CD8-positive, alpha-beta T cell (primary cell): ENCODE measurements at regions of chr10 and their contacts with region 1.

Region 1: GRCh38 chr10:104231784-104232612 is at the start of gene CFAP43:
- DNase-seq: peak; percentile 98 to 100 (median 99)
- ATAC-seq: peak; percentile 99
- H3K4me3 ChIP-seq: peak within 1 kb of the TSS; percentile 64 to 67
- H3K4me3 Mint-ChIP-seq: peak within 1 kb of the TSS; percentile 87
- H3K27ac ChIP-seq: peak within 1 kb of the TSS in 1 of 2 experiments; percentile 52
- H3K27ac Mint-ChIP-seq: peak within 1 kb of the TSS; percentile 79
- H3K4me1 ChIP-seq: peaks cover 4% of the 10 kb centered on the region
- H3K4me1 Mint-ChIP-seq: peaks cover 10% of the 10 kb centered on the region
- H3K27me3 ChIP-seq: peaks cover 0 to 10% of the 10 kb centered on the region in 2 experiments
- H3K27me3 Mint-ChIP-seq: peaks cover 9% of the 10 kb centered on the region
- CTCF ChIP-seq: no peak
- total RNA-seq, gene CFAP43: not detected

Region 2: DNA sequence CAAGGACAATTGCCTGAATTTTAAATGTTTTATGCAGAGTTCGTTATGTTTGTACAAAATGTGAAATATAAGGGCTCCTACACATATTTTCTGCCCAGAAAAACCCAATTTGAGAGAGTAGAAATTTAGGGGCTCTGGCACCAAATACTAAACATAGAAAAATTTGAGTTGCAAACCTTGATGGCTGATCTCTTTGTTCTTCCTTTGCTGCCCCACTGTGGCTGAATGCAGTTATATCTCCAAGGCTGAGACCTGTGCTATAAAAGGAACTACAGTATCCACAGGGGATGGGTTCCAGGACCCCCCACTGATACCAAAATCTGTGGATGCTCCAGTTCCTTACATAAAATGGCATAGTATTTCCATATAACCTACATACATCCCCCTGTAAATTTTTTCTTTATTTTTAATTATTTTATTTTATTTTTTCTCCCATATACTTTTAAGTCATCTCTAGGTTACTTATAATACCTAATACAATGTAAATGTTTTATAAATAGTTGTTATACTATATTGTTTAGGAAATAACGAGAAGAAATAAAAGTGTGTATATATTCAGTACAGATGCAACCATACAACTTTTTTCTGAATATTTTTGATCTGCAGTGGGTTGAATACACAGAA is 22.3 kb before region 1 on chr10:
- CTCF ChIA-PET with region 1: no interaction called
- POLR2A ChIA-PET with region 1: no interaction called
- intact Hi-C with region 1: no loop called
- DNase-seq: peak in 7 of 9 experiments; percentile 10 to 65 (median 45)
- ATAC-seq: peak; percentile 71
- H3K4me3 ChIP-seq: no peak overlapping the region
- H3K4me3 Mint-ChIP-seq: no peak overlapping the region
- H3K27ac ChIP-seq: no peak overlapping the region
- H3K27ac Mint-ChIP-seq: no peak overlapping the region
- H3K4me1 ChIP-seq: no peaks in the 10 kb centered on the region
- H3K4me1 Mint-ChIP-seq: no peaks in the 10 kb centered on the region
- H3K27me3 ChIP-seq: no peaks in the 10 kb centered on the region
- H3K27me3 Mint-ChIP-seq: peaks cover 14% of the 10 kb centered on the region
- CTCF ChIP-seq: peak; percentile 54

Region 3: DNA sequence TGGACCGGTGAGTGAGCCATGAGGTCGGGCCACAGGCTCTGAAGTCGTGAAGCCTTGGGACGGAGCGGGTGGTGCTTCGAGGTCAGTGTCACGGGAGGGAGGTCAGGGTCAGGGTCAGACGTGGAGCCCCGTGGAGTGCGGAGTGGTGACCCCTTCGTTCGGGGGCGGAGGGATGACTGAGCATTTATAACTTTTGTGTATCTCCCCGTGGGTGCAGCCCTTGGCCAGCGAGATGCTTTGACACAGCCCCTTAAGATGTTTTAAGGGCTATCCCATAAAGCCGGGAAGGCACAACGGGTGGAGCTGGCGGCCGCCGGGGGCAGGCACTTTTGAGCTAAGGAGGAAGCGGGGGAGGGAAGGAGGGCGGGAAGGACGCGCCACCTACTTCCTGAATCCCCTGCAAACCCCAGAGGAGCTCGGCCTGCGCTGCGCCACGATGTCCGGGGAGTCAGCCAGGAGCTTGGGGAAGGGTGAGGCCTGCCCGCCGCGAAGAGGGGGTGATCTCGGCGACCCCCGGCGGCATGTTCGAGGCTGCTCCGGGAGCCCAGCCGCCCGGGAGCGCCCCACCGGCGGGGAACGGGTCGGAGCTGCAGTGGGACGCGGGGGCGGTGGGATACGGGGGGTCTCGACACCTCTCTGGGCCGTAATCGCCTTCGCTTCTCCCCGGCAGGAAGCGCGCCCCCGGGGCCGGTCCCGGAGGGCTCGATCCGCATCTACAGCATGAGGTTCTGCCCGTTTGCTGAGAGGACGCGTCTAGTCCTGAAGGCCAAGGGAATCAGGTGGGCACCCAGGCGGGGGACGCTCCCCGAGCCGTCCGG is 22.7 kb after region 1 on chr10 and contains the start of gene GSTO1:
- CTCF ChIA-PET with region 1: no interaction called
- POLR2A ChIA-PET with region 1: interaction called, 3 read pairs
- intact Hi-C with region 1: loop called (anchors 1 to 2 kb)
- DNase-seq: peak in 8 of 9 experiments; percentile 37 to 76 (median 52)
- ATAC-seq: peak; percentile 59
- H3K4me3 ChIP-seq: peak within 1 kb of the TSS; percentile 81 to 84
- H3K4me3 Mint-ChIP-seq: peak within 1 kb of the TSS; percentile 91
- H3K27ac ChIP-seq: peak within 1 kb of the TSS; percentile 62 to 78
- H3K27ac Mint-ChIP-seq: peak within 1 kb of the TSS; percentile 94
- H3K4me1 ChIP-seq: peaks cover 20% of the 10 kb centered on the region
- H3K4me1 Mint-ChIP-seq: peaks cover 49% of the 10 kb centered on the region
- H3K27me3 ChIP-seq: no peaks in the 10 kb centered on the region
- H3K27me3 Mint-ChIP-seq: no peaks in the 10 kb centered on the region
- CTCF ChIP-seq: no peak
- total RNA-seq, gene GSTO1: 9.8 to 11.8 TPM